ENCODE measurements at regions of chr3 and their contacts with region 1.

Region 1: DNA sequence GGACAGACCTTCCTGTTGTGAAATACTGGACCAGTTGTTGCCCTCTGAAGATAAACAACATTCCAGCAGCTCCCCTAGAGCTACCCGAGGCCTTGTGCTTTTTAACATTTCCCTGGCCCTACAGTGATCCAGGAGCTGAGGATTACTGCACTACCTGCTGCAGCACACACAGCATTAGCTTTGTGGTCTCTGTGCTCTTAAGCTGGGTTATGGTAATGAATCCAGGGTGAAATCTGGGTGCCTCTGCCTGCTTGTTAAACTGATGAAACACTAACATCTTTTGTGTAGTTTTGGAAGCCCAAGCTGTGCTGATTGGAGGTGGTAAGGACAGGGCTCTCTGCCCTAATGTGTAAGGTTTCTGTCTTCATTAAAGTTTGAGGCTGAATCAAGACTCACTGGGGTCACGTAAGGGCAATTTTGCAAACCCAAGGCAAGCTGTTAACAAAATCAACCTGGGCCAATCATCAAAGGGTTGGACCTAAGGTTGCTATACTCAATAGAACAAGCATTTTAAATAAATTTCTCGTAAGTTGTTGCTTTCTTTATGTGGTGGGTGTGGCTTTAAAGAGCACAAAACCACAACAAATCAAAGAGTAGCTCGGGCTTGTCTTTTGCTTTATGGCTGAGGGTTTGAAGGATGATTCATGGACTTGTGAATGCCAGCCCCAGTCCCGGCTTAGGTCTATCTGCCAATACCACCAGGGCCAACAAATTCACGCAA is 183.9 kb downstream of the TPRG1 start:
- DNase-seq: peak in 8 of 9 donors; percentile 27 to 76 (median 62)
- ATAC-seq: peak; percentile 83
- H3K4me3 ChIP-seq: peak overlapping the region; percentile 27
- H3K4me3 Mint-ChIP-seq: peak overlapping the region; percentile 68 to 86 (median 78)
- H3K27ac ChIP-seq: peak overlapping the region; percentile 47
- H3K27ac Mint-ChIP-seq: peak overlapping the region; percentile 85 to 98 (median 92)
- H3K4me1 ChIP-seq: peaks cover 12 to 21% of the 10 kb centered on the region in 2 donors
- H3K4me1 Mint-ChIP-seq: peaks cover 11 to 43% (median 34%) of the 10 kb centered on the region in 7 donors
- H3K27me3 ChIP-seq: no peaks in the 10 kb centered on the region
- H3K27me3 Mint-ChIP-seq: no peaks in the 10 kb centered on the region

Region 2: GRCh38 chr3:189288348-189289235 is 67.0 kb before region 1 on chr3:
- CTCF ChIA-PET with region 1: no interaction called
- POLR2A ChIA-PET with region 1: no interaction called
- intact Hi-C with region 1: loop called in 1 of 2 experiments (anchors 5 kb)
- DNase-seq: no peak
- ATAC-seq: no peak
- H3K4me3 ChIP-seq: no peak overlapping the region
- H3K4me3 Mint-ChIP-seq: peak overlapping the region in 5 of 10 donors; percentile 0 to 19 (median 12)
- H3K27ac ChIP-seq: no peak overlapping the region
- H3K27ac Mint-ChIP-seq: peak overlapping the region in 7 of 9 donors; percentile 3 to 53 (median 14)
- H3K4me1 ChIP-seq: peaks cover 6 to 22% of the 10 kb centered on the region in 2 donors
- H3K4me1 Mint-ChIP-seq: peaks cover 14 to 46% (median 36%) of the 10 kb centered on the region in 7 donors
- H3K27me3 ChIP-seq: no peaks in the 10 kb centered on the region
- H3K27me3 Mint-ChIP-seq: no peaks in the 10 kb centered on the region

Region 3: DNA sequence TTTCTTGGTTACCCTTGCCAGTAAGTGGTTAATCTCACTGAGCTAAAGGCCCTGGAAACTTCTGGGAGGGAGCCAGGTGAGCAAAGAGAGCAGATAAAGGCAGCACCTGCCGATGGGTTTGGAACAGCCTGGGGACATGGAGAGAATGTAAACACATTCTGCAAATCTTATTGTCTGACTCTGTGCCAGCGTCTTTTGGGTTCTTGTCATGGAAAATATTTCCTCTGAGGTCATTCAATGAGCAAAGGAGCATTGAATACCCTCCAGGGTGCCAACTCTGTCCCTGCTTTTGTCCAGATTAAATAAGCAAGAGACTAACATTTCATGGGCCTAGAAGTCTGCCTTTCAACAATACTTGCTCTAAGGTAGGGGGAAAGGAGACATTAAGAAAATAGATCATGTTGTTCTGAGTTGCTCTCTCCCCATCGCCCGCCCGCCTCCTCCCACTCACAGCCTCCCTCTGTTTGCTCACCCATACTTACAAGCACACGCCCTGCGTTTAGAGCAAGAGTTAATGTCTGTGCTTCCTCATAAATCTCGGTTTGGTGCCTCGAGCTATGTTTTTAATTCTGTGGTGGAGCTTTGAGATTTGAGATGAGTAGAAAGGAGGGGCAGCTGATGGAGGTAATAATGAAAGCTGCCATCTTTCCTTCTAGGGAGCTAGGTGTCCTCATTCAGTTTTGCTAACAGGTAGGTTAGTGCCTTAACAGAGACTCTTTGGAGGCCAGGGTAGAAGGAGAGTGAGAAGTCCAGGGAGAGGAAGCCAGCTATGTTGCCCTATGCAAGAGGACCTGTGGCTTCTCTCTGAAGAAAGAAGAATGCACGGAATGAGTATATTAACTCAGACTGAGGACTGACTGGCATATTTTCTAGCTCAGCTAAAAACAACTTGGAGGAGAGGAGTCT is 50.9 kb before region 1 on chr3:
- CTCF ChIA-PET with region 1: no interaction called
- POLR2A ChIA-PET with region 1: no interaction called
- intact Hi-C with region 1: loop called (anchors 2 to 10 kb)
- DNase-seq: peak in 5 of 9 donors; percentile 16 to 42 (median 28)
- ATAC-seq: no peak
- H3K4me3 ChIP-seq: no peak overlapping the region
- H3K4me3 Mint-ChIP-seq: peak overlapping the region; percentile 27 to 77 (median 64)
- H3K27ac ChIP-seq: no peak overlapping the region
- H3K27ac Mint-ChIP-seq: peak overlapping the region; percentile 44 to 93 (median 86)
- H3K4me1 ChIP-seq: peaks cover 0 to 19% of the 10 kb centered on the region in 2 donors
- H3K4me1 Mint-ChIP-seq: peaks cover 15 to 68% (median 57%) of the 10 kb centered on the region in 7 donors
- H3K27me3 ChIP-seq: no peaks in the 10 kb centered on the region
- H3K27me3 Mint-ChIP-seq: no peaks in the 10 kb centered on the region

Region 4: DNA sequence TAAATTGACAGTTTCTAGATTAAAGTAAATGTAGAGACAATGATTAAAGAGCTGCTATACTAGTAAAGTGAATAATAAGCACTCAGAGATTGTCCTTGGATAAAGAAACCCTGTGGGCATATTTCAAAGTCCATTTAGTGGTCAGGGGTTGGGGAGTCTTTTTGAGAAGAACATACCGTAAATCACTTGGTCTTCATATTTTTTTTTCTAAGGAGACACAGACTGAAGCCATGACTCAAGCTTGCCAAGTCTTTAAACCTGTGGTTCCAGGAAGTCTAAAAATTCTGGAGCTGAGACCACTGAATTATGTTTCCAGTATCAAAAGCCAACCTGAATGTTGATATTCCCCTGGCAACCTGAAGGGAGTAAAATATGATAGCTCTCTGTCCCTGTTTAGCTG is 12.8 kb before region 1 on chr3:
- CTCF ChIA-PET with region 1: interaction called, 3 read pairs
- POLR2A ChIA-PET with region 1: interaction called, 13 read pairs
- intact Hi-C with region 1: loop called in 1 of 2 experiments (anchors 1 kb)
- DNase-seq: no peak
- ATAC-seq: no peak
- H3K4me3 ChIP-seq: no peak overlapping the region
- H3K4me3 Mint-ChIP-seq: no peak overlapping the region
- H3K27ac ChIP-seq: no peak overlapping the region
- H3K27ac Mint-ChIP-seq: no peak overlapping the region
- H3K4me1 ChIP-seq: no peaks in the 10 kb centered on the region
- H3K4me1 Mint-ChIP-seq: peaks cover 0 to 17% (median 3%) of the 10 kb centered on the region in 7 donors
- H3K27me3 ChIP-seq: no peaks in the 10 kb centered on the region
- H3K27me3 Mint-ChIP-seq: no peaks in the 10 kb centered on the region

Region 5: GRCh38 chr3:189394599-189395121 is 39.0 kb after region 1 on chr3:
- CTCF ChIA-PET with region 1: no interaction called
- POLR2A ChIA-PET with region 1: no interaction called
- intact Hi-C with region 1: loop called in 1 of 2 experiments (anchors 5 kb)
- DNase-seq: no peak
- ATAC-seq: no peak
- H3K4me3 ChIP-seq: no peak overlapping the region
- H3K4me3 Mint-ChIP-seq: peak overlapping the region in 1 of 10 donors; percentile 31
- H3K27ac ChIP-seq: no peak overlapping the region
- H3K27ac Mint-ChIP-seq: peak overlapping the region in 1 of 9 donors; percentile 62
- H3K4me1 ChIP-seq: no peaks in the 10 kb centered on the region
- H3K4me1 Mint-ChIP-seq: peaks cover 0 to 25% (median 0%) of the 10 kb centered on the region in 7 donors
- H3K27me3 ChIP-seq: no peaks in the 10 kb centered on the region
- H3K27me3 Mint-ChIP-seq: peaks cover 0 to 3% (median 0%) of the 10 kb centered on the region in 5 donors

Region 6: GRCh38 chr3:189513281-189514117 is 157.9 kb after region 1 on chr3:
- CTCF ChIA-PET with region 1: no interaction called
- POLR2A ChIA-PET with region 1: no interaction called
- intact Hi-C with region 1: no loop called
- DNase-seq: no peak
- ATAC-seq: no peak
- H3K4me3 ChIP-seq: no peak overlapping the region
- H3K4me3 Mint-ChIP-seq: no peak overlapping the region
- H3K27ac ChIP-seq: no peak overlapping the region
- H3K27ac Mint-ChIP-seq: peak overlapping the region in 1 of 9 donors; percentile 47
- H3K4me1 ChIP-seq: no peaks in the 10 kb centered on the region
- H3K4me1 Mint-ChIP-seq: peaks cover 0 to 10% (median 3%) of the 10 kb centered on the region in 7 donors
- H3K27me3 ChIP-seq: no peaks in the 10 kb centered on the region
- H3K27me3 Mint-ChIP-seq: peaks cover 0 to 4% (median 0%) of the 10 kb centered on the region in 5 donors

Region 7: DNA sequence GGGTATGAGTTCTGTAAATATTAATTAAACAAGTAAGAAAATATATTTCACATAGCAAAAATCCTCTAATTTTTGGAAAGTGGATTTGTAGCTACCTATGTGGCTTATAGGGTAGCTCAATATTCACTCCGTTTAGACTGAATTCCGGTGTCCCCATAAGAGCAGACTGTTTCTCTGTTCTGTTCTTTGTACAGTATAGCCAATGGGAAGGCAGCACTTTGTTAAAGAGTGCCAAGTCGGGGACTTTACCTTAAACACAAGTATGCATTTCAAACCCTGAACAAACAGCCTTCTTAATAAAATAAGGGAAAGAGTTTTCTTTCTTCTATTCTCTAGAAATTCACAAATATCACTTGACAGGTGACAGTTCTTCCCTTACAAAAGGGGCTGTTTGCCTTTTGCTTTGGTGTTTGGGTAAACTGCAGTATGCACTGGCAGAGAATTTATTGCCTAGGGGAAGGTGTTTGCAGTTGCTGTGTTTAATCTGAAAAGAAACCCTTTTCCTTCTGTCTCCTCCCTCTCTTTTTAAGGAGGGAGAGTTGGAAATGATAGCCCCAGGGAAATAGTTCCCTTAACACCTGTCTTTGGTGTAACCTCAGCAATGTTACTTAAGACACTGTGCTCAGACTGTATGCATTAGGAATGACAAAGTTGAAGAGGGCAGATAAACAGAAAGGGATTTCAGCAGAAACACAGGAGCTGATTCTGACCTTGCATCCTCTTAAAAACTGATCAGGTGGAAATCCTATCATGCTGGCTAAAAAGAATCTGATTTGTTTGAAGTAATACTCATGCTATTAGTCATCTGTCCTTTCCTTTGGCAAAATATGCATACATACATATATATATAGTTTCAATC is 400.8 kb after region 1 on chr3:
- CTCF ChIA-PET with region 1: no interaction called
- POLR2A ChIA-PET with region 1: no interaction called
- intact Hi-C with region 1: no loop called
- DNase-seq: no peak
- ATAC-seq: no peak
- H3K4me3 ChIP-seq: no peak overlapping the region
- H3K4me3 Mint-ChIP-seq: no peak overlapping the region
- H3K27ac ChIP-seq: no peak overlapping the region
- H3K27ac Mint-ChIP-seq: no peak overlapping the region
- H3K4me1 ChIP-seq: no peaks in the 10 kb centered on the region
- H3K4me1 Mint-ChIP-seq: no peaks in the 10 kb centered on the region
- H3K27me3 ChIP-seq: no peaks in the 10 kb centered on the region
- H3K27me3 Mint-ChIP-seq: no peaks in the 10 kb centered on the region

Measured in naive thymus-derived CD4-positive, alpha-beta T cell (primary cell).